ENCODE measurements at regions of chr1 and their contacts with region 1.

Region 1: GRCh38 chr1:176374967-176375569 is 87.9 kb upstream of the PAPPA2 start:
- DNase-seq: peak; percentile 45
- H3K4me3 ChIP-seq: no peak overlapping the region; a peak in 1 of 4 replicates
- H3K27ac ChIP-seq: no peak overlapping the region
- H3K4me1 ChIP-seq: no peaks in the 10 kb centered on the region
- H3K27me3 ChIP-seq: no peaks in the 10 kb centered on the region
- CTCF ChIP-seq: peak; percentile 80
- EP300 ChIP-seq: no peak
- RAD21 ChIP-seq: peak; percentile 89

Region 2: DNA sequence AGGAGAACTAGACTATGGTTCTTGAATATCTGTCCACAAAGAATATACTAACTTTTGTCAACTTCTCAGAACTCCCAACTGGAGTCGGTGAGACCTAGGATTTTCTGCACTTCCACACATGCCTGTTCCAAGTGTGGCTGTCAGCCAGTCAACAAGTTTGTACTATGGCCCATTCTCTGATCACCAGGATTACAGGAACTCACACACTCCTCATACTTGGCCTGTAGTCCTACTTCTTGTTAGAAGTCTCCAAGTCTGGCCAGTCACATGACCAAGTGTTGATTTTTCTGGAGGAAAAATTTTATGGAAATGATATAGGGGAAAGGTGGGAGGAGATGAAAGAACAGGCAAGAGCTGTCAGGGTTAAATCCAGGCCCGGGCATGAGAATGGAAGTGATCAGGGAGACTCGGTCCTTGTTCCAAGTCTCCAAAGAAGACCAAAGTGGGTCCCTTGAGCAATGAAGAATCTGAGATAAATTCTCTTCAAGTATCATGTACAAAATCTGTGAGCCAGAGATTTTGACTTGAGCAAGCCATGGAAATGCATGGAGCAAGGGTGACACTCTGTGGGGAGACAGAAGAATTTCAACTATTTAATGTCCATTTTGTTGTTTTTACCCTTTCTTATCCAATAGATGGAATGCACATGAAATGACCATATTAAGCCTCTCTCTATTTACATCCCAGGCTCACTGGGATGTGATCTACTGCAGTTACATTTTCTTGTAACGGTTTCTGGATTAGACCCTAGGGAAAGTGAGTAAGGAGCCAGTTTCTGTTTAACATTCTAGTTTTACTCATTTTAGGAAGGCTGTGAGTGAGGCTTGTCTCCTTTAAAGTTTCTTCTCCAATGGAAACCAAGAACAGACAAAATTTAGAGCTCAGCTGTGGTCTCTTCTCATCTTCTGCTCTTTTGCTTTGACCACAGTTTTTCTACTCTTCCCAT is 468.6 kb after region 1 on chr1:
- CTCF ChIA-PET with region 1: interaction called, 50 read pairs
- POLR2A ChIA-PET with region 1: no interaction called
- DNase-seq: peak; percentile 37
- H3K4me3 ChIP-seq: no peak overlapping the region; a peak in 1 of 4 replicates
- H3K27ac ChIP-seq: no peak overlapping the region
- H3K4me1 ChIP-seq: peaks cover 0 to 10% of the 10 kb centered on the region in 2 experiments; a peak in 2 of 4 replicates
- H3K27me3 ChIP-seq: no peaks in the 10 kb centered on the region
- CTCF ChIP-seq: peak; percentile 54
- EP300 ChIP-seq: no peak
- RAD21 ChIP-seq: peak; percentile 97

Region 3: GRCh38 chr1:176880954-176881595 is 506.0 kb after region 1 on chr1:
- CTCF ChIA-PET with region 1: interaction called, 12 read pairs
- POLR2A ChIA-PET with region 1: no interaction called
- DNase-seq: peak; percentile 75
- H3K4me3 ChIP-seq: peak overlapping the region in 1 of 2 experiments; percentile 20; a peak in 1 of 4 replicates
- H3K27ac ChIP-seq: no peak overlapping the region
- H3K4me1 ChIP-seq: peaks cover 0 to 4% of the 10 kb centered on the region in 2 experiments; a peak in 1 of 4 replicates
- H3K27me3 ChIP-seq: no peaks in the 10 kb centered on the region
- CTCF ChIP-seq: peak; percentile 93
- EP300 ChIP-seq: no peak
- RAD21 ChIP-seq: peak; percentile 86